ENCODE measurements at regions of chr3 and their contacts with region 1.

Region 1: GRCh38 chr3:50503504-50504342 is at the start of gene CACNA2D2:
- DNase-seq: peak; percentile 79
- ATAC-seq: peak; percentile 80
- H3K4me3 Mint-ChIP-seq: peak within 1 kb of the TSS; percentile 73
- H3K27ac Mint-ChIP-seq: no peak within 1 kb of the TSS
- H3K4me1 Mint-ChIP-seq: peaks cover 15% of the 10 kb centered on the region
- H3K27me3 Mint-ChIP-seq: peaks cover 39% of the 10 kb centered on the region
- CTCF ChIP-seq: no peak
- total RNA-seq, gene CACNA2D2: 22.0 to 23.4 TPM (median 22.3 TPM) in 3 replicates

Region 2: GRCh38 chr3:50455161-50456018 is 48.3 kb before region 1 on chr3:
- CTCF ChIA-PET with region 1: no interaction called
- POLR2A ChIA-PET with region 1: no interaction called
- DNase-seq: no peak
- ATAC-seq: no peak
- H3K4me3 Mint-ChIP-seq: no peak overlapping the region
- H3K27ac Mint-ChIP-seq: peak overlapping the region; percentile 41
- H3K4me1 Mint-ChIP-seq: peaks cover 26% of the 10 kb centered on the region
- H3K27me3 Mint-ChIP-seq: peaks cover 2% of the 10 kb centered on the region; the same call in 1 of the 2 replicates
- CTCF ChIP-seq: no peak

Region 3: GRCh38 chr3:50475348-50475747 is 28.4 kb before region 1 on chr3:
- CTCF ChIA-PET with region 1: no interaction called
- POLR2A ChIA-PET with region 1: no interaction called
- DNase-seq: no peak
- ATAC-seq: no peak
- H3K4me3 Mint-ChIP-seq: no peak overlapping the region
- H3K27ac Mint-ChIP-seq: no peak overlapping the region
- H3K4me1 Mint-ChIP-seq: peaks cover 7% of the 10 kb centered on the region
- H3K27me3 Mint-ChIP-seq: no peaks in the 10 kb centered on the region; the same call in 1 of the 2 replicates
- CTCF ChIP-seq: no peak

Region 4: DNA sequence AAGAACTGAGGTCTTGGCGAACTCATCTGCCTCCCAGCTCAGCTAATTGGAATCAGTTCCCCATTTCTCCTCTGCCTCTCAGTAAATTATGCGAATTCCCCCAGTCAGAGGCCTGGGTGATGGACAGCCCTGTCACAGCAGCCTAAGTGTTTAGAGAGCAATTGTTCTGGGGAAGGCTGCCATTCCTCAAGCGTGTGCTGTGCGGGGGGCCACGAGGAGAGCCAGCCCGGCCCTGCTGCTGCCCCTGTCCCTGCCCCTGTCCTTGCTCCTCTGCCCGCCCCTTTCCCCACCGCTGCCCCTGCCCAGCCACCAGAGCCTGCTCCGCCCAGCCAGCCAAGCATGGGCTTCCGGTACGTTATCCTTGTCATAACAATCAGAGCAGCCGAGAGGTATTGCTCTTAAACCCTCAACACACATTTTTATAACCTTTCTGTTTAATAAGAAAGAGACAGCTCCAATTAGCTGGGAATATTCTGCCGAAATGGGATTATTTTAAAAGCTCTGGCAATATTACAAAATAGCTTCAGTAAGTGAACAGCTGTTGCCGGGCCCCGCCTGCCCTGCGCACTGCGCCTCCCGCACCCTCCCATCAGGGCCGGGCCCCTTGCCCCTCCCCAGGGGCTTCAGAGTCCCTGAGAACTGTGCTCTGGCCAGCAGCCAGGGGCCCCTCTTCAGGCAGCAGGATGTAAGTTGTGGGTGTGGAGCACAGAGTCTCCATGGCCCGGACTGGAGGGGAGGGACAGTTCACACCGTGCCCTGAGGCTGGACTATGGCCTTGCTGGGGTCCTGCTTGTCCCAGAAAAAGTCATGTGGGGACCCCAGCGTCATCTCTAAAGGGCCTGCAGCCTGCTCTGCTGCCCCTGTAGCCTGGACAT is 12.1 kb after region 1 on chr3:
- CTCF ChIA-PET with region 1: interaction called, 10 read pairs
- POLR2A ChIA-PET with region 1: no interaction called
- DNase-seq: peak; percentile 70
- ATAC-seq: peak; percentile 69
- H3K4me3 Mint-ChIP-seq: peak overlapping the region; percentile 33
- H3K27ac Mint-ChIP-seq: 0 out of 2 replicates have a peak overlapping the region, but pooled peaks have one; percentile 15
- H3K4me1 Mint-ChIP-seq: peaks cover 57% of the 10 kb centered on the region
- H3K27me3 Mint-ChIP-seq: peaks cover 5% of the 10 kb centered on the region
- CTCF ChIP-seq: no peak